HEK293 (cell line): ENCODE measurements at regions of chr6 and their contacts with region 1.

Region 1: DNA sequence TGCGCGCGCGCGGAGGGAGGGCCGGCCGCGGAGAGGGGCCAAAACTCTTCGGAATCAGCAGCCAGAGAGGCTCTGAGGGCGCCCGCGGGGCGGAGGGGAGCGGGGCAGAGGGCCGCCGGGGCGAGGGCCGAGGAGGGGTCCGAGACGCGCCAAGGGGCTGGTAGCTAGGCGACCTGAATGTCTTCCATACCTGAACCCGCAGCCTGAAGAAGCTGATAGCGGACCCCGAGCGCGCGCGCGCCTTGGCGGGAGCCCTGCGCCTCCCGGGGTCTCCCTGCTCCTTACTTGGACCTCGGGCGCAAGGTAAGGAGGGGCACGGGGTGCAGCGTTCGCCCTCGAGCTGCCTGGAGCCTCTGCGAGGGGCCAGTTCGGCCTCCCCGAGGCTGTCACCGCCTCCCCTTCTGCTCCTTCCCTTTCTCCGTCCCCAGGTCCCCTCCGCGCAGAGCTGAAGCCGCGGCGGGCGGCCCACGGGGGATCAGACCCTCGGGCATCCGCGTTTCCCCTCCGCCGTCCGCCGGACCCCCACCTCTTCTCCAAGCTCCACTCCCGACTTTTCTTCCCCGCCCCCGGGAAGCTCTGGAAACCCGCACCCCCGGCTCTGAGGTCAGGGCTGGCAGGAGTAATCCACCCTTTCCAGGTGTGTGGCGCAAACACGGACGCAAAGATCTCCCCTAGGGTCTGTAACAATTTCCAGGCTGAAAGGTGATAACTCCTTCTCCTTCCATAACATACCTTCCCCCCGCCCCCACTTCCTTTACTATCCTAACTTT is 13.1 kb upstream of the DEK start:
- H3K4me3 ChIP-seq: peak overlapping the region; percentile 68
- H3K27ac ChIP-seq: peak overlapping the region; percentile 30; the same call in 1 of the 2 replicates
- H3K4me1 ChIP-seq: peaks cover 17% of the 10 kb centered on the region
- CTCF ChIP-seq: no peak

Region 2: DNA sequence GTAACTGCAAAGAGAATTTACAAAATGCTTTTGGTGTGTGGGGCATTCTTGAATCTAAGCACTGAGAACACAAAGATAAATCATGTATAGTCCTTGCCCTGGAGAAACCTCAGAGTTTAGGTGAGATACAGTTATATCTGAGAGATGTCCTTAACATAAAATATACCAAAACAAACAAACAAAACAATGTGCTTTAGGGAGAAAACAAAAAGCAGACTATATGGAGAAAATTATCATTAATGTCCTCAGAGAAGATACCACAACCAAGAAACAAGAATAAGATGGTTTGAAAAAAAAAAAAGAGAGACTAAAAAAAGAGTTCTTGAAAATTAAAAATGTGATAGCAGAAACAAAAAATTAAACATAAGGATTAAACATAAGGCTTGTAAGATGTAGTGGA is 297.9 kb before region 1 on chr6:
- CTCF ChIA-PET with region 1: no interaction called
- POLR2A ChIA-PET with region 1: interaction called, 10 read pairs
- H3K4me3 ChIP-seq: no peak overlapping the region
- H3K27ac ChIP-seq: no peak overlapping the region
- H3K4me1 ChIP-seq: peaks cover 2% of the 10 kb centered on the region; the same call in 1 of the 2 replicates
- CTCF ChIP-seq: no peak

Region 3: GRCh38 chr6:18293076-18293904 is 15.9 kb after region 1 on chr6:
- CTCF ChIA-PET with region 1: interaction called, 3 read pairs
- POLR2A ChIA-PET with region 1: interaction called, 11 read pairs
- H3K4me3 ChIP-seq: no peak overlapping the region
- H3K27ac ChIP-seq: no peak overlapping the region
- H3K4me1 ChIP-seq: no peaks in the 10 kb centered on the region
- CTCF ChIP-seq: no peak